ENCODE measurements at regions of chr1 and their contacts with region 1.

Region 1: DNA sequence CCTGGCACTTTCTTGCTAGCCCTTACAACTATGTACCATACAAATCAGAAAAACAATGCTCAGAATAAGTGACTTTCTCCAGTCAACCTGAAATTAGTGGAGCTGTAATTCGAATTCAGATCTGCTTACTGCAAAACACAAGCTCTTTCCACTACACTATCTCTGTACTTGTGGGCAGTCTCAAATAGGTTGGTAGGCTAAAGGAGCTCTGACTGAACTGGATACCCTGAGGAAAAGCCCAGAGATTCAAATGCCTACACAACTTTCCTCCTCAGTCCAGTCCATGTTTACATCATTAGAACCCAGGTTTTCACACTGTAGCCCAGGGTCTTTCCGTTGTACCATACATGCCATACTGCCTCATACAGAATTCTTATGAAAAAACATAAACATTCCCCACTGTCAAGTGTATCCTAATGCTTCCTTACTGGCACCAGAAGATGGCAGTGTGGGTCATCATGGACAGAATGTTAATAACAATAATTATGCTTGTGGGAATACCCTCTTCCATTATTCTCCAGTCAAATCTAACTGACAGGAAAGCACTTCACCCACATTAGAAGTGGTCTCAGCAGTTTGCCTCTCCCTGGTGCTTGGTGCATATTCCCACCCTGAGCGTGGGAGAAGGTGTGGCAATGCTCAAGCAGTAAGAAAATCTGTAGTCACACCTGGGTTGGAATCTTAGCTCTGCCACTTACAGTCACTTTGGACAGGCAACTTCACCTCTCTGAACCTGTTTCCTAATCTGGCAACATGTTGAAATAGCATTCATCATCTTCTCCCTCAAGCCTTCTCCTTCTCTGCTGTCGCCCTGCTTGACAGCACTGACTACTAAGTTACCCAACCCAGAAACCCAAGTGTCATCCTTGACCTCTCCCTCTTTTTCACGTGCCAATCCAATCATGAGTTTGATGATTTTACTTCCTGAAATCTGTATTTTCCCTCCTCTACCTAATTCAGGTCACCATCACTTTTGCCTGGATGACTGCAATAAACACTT is 14.4 kb upstream of the ZFYVE9 start:
- DNase-seq: peak; percentile 20
- H3K4me3 Mint-ChIP-seq: no peak overlapping the region
- H3K27ac Mint-ChIP-seq: no peak overlapping the region
- H3K4me1 Mint-ChIP-seq: peaks cover 4% of the 10 kb centered on the region
- H3K27me3 Mint-ChIP-seq: peaks cover 7% of the 10 kb centered on the region

Region 2: GRCh38 chr1:51843948-51844347 is 283.5 kb before region 1 on chr1:
- CTCF ChIA-PET with region 1: no interaction called
- POLR2A ChIA-PET with region 1: no interaction called
- intact Hi-C with region 1: no loop called
- DNase-seq: peak; percentile 53
- H3K4me3 Mint-ChIP-seq: no peak overlapping the region
- H3K27ac Mint-ChIP-seq: peak overlapping the region; percentile 1
- H3K4me1 Mint-ChIP-seq: peaks cover 25% of the 10 kb centered on the region
- H3K27me3 Mint-ChIP-seq: no peaks in the 10 kb centered on the region

Region 3: GRCh38 chr1:52296345-52296744 is 168.9 kb after region 1 on chr1:
- CTCF ChIA-PET with region 1: interaction called, 25 read pairs
- POLR2A ChIA-PET with region 1: no interaction called
- intact Hi-C with region 1: loop called (anchors 1 kb)
- DNase-seq: no peak
- H3K4me3 Mint-ChIP-seq: no peak overlapping the region
- H3K27ac Mint-ChIP-seq: no peak overlapping the region
- H3K4me1 Mint-ChIP-seq: no peaks in the 10 kb centered on the region
- H3K27me3 Mint-ChIP-seq: no peaks in the 10 kb centered on the region

Region 4: GRCh38 chr1:52683367-52683940 is 556.0 kb after region 1 on chr1:
- CTCF ChIA-PET with region 1: interaction called, 3 read pairs
- POLR2A ChIA-PET with region 1: no interaction called
- intact Hi-C with region 1: loop called (anchors 1 kb)
- DNase-seq: no peak
- H3K4me3 Mint-ChIP-seq: no peak overlapping the region
- H3K27ac Mint-ChIP-seq: peak overlapping the region; percentile 28
- H3K4me1 Mint-ChIP-seq: peaks cover 6% of the 10 kb centered on the region
- H3K27me3 Mint-ChIP-seq: no peaks in the 10 kb centered on the region